ENCODE measurements at regions of chrX and their contacts with region 1.

Region 1: DNA sequence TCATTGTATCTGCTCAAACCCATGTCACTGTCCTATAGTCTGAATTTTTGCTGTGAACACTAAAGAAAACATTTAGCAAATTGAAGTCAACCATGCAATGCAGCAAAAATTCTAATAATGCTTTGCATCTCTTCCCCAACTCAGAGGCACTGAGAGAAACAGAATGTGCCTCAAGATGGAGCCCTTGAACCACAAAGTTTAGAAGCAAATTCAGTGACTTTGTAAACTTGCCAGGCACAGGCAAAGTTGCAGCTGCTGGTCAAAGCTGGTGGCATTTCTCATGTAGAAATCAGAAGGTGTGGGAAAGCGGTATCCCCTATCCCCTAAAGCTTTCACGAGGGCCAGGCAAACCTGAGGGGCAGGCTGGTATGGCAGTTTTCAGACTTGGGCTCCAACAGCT is 121.7 kb upstream of the DIPK2B start:
- DNase-seq: peak in 3 of 5 donors; percentile 8 to 25 (median 21)
- ATAC-seq: peak in 1 of 4 donors; percentile 63
- H3K4me3 ChIP-seq: no peak overlapping the region
- H3K27ac ChIP-seq: no peak overlapping the region
- H3K4me1 ChIP-seq: no peaks in the 10 kb centered on the region
- H3K27me3 ChIP-seq: peaks cover 0 to 41% (median 0%) of the 10 kb centered on the region in 9 donors
- CTCF ChIP-seq: peak in 11 of 12 donors; percentile 32 to 54 (median 41)
- POLR2A ChIP-seq: no peak

Region 2: DNA sequence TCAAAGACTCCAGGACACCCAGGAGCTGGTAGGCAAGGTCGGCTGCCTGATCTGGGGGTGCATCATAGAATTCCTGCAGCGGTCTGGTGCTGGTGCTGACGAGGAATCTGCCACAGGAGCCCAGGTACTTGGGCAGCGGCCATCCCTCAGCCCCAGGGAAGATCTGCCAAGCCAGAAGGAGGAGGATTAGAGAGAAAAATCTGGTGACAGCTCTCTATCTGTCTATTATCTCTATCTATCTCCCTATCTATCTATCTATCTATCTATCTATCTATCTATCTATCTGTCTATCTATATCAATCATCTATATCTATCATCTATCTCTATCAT is 168.4 kb before region 1 on chrX:
- intact Hi-C with region 1: no loop called
- DNase-seq: no peak
- ATAC-seq: no peak
- H3K4me3 ChIP-seq: no peak overlapping the region
- H3K27ac ChIP-seq: no peak overlapping the region
- H3K4me1 ChIP-seq: no peaks in the 10 kb centered on the region
- H3K27me3 ChIP-seq: no peaks in the 10 kb centered on the region
- CTCF ChIP-seq: no peak
- POLR2A ChIP-seq: no peak

Region 3: DNA sequence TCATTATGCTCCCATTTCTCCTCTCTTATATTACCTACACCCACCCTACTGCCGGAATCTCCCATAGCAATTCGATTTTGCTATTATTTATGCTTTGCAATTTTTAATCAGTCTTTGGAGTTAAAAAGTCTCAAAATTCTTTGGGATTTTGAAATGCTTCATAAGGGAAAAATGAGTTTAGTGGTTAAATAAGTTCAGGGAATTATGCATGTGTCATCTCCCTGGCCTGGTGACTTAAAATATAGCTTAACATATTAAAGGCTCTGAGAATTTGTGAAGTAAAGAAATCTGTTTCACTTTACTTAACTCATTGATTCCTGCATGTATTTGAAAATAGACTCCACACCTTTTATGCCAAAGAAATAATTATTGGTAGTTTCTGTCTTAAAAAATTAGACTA is 63.4 kb after region 1 on chrX:
- intact Hi-C with region 1: no loop called
- DNase-seq: no peak
- ATAC-seq: no peak
- H3K4me3 ChIP-seq: no peak overlapping the region
- H3K27ac ChIP-seq: no peak overlapping the region
- H3K4me1 ChIP-seq: no peaks in the 10 kb centered on the region
- H3K27me3 ChIP-seq: no peaks in the 10 kb centered on the region
- CTCF ChIP-seq: no peak
- POLR2A ChIP-seq: no peak

Region 4: DNA sequence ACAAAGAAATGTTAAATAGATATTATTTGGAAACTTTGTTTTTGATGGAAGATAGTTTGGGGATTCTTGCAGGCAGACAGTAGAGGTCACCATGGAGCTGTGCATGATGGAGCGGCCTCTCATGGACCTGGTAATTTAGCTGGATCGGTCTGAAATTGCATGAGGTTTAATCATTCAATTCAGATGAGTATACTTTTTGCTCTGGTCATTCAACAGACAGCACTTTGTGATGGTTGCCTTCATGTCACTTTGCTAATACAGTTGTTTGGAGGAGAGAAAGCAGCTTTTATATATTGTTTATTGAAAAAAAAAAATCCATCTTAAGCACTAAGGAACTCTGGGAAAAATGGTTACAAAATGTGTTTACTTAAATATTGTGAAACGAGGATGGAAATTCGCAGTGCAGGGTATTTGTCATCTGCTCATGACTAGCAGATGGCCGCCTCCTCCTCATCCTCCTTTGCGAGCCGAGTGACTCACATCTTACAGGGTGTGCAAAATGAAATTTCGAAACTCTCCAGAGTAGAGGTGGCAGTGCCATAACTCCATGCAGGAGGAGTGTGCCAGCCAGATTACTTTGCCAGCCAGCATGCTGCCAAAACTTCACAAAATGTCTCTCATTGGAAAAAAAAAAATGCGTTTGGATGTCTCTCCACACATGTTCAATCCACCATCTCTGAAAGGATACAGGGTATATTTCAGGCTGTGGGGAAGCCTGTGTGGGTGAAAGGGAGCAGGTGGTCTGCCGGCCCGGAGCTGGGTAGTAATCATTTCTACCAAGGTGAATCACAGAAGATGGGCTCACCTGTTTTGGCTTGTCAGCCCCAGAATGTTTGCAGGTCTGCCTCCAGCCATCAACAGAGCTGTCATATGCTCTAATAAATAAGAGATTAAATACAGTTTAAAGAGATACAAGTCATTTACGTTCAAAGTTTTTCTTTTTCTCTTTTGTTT is 193.2 kb after region 1 on chrX:
- intact Hi-C with region 1: loop called in 5 of 10 experiments (anchors 5 to 10 kb)
- DNase-seq: peak in 4 of 5 donors; percentile 20 to 51 (median 38)
- ATAC-seq: peak; percentile 64 to 90 (median 81)
- H3K4me3 ChIP-seq: peak overlapping the region in 1 of 12 donors; percentile 6
- H3K27ac ChIP-seq: peak overlapping the region in 2 of 12 donors; percentile 14 to 22
- H3K4me1 ChIP-seq: peaks cover 0 to 8% (median 0%) of the 10 kb centered on the region in 12 donors
- H3K27me3 ChIP-seq: peaks cover 0 to 15% (median 0%) of the 10 kb centered on the region in 9 donors
- CTCF ChIP-seq: peak; percentile 40 to 68 (median 56)
- POLR2A ChIP-seq: no peak

Region 5: GRCh38 chrX:45743081-45743533 is 420.7 kb after region 1 on chrX:
- intact Hi-C with region 1: loop called in 2 of 10 experiments (anchors 10 kb)
- DNase-seq: no peak
- ATAC-seq: peak in 2 of 4 donors; percentile 22 to 29
- H3K4me3 ChIP-seq: no peak overlapping the region
- H3K27ac ChIP-seq: no peak overlapping the region
- H3K4me1 ChIP-seq: peaks cover 0 to 3% (median 0%) of the 10 kb centered on the region in 12 donors
- H3K27me3 ChIP-seq: peaks cover 0 to 38% (median 0%) of the 10 kb centered on the region in 9 donors
- CTCF ChIP-seq: peak in 1 of 12 donors; percentile 6
- POLR2A ChIP-seq: no peak

Region 6: DNA sequence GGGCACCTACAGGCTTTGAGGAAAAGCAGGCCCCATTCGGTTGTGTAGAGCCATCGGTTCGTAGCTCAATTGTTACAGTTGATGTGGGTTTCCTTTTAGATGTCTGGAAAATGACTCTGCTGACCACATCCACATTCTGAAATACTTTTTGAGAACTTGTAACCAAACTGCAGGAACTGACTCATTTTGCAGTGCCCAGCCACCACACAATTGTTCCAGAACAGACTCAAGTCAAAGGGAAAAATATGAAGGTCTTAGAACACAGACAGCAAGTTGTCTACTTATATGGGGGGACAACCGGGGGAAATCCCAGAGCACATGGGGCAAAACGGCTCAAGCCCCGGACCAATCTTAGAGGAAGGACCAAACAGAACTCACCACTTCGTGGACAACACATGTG is 435.9 kb after region 1 on chrX:
- intact Hi-C with region 1: loop called in 2 of 10 experiments (anchors 5 to 10 kb)
- DNase-seq: no peak
- ATAC-seq: peak in 3 of 4 donors; percentile 42 to 57 (median 49)
- H3K4me3 ChIP-seq: peak overlapping the region in 1 of 12 donors; percentile 34
- H3K27ac ChIP-seq: peak overlapping the region in 8 of 12 donors; percentile 1 to 88 (median 26)
- H3K4me1 ChIP-seq: peaks cover 0 to 85% (median 0%) of the 10 kb centered on the region in 12 donors
- H3K27me3 ChIP-seq: peaks cover 0 to 15% (median 0%) of the 10 kb centered on the region in 9 donors
- CTCF ChIP-seq: no peak
- POLR2A ChIP-seq: no peak

Region 7: GRCh38 chrX:46366381-46367207 is 1044.2 kb after region 1 on chrX:
- intact Hi-C with region 1: loop called in 2 of 10 experiments (anchors 10 kb)
- DNase-seq: no peak
- ATAC-seq: no peak
- H3K4me3 ChIP-seq: no peak overlapping the region
- H3K27ac ChIP-seq: no peak overlapping the region
- H3K4me1 ChIP-seq: no peaks in the 10 kb centered on the region
- H3K27me3 ChIP-seq: peaks cover 0 to 24% (median 0%) of the 10 kb centered on the region in 9 donors
- CTCF ChIP-seq: no peak
- POLR2A ChIP-seq: no peak

Region 8: GRCh38 chrX:46381630-46382029 is 1059.2 kb after region 1 on chrX:
- intact Hi-C with region 1: loop called in 3 of 10 experiments (anchors 2 to 10 kb)
- DNase-seq: no peak
- ATAC-seq: no peak
- H3K4me3 ChIP-seq: no peak overlapping the region
- H3K27ac ChIP-seq: no peak overlapping the region
- H3K4me1 ChIP-seq: no peaks in the 10 kb centered on the region
- H3K27me3 ChIP-seq: peaks cover 0 to 4% (median 0%) of the 10 kb centered on the region in 9 donors
- CTCF ChIP-seq: peak in 5 of 12 donors; percentile 11 to 32 (median 24)
- POLR2A ChIP-seq: no peak

Measured in heart left ventricle (tissue), 16 donors.